Posterior vena cava (tissue), 2 donors: ENCODE measurements at regions of chr20 and their contacts with region 1.

Region 1: DNA sequence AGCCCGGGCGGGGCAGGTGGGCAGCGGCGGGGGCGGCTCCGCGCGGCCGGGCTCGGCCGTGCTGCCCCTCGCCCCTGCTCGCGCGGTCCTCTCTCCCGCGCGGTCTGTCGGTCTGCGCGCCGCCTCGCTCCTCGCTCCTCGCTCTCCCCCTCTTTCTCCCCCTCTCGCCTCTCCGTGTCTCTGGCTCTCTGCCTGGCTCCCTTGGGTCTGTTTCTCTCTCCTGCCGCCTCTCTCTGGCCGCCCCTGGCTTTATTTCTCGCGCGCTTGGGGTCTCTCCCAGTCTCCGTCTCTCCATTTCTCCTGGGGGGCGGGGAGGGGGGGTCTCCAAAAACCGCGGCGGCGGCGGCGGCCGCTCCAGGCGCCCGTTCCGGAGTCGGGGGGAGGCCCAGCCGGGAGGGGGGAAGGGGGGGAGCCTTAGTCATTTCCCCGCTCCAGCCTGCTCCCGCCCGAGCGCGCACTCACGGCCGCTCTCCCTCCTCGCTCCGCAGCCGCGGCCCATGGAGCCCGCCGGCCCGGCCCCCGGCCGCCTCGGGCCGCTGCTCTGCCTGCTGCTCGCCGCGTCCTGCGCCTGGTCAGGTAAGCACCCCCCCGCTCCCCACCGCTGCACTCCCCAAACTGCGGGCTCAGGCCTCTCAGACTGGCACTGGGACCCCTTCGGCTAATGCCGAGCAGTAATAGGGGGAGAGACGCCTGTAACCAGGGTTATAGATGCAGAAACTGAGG is at the start of gene SIRPA:
- DNase-seq: peak; percentile 91
- total RNA-seq, gene SIRPA: 39.7 to 42.1 TPM

Region 2: GRCh38 chr20:1802385-1803060 is 92.6 kb before region 1 on chr20:
- intact Hi-C with region 1: loop called in 1 of 2 experiments (anchors 10 kb)
- DNase-seq: peak; percentile 92

Region 3: DNA sequence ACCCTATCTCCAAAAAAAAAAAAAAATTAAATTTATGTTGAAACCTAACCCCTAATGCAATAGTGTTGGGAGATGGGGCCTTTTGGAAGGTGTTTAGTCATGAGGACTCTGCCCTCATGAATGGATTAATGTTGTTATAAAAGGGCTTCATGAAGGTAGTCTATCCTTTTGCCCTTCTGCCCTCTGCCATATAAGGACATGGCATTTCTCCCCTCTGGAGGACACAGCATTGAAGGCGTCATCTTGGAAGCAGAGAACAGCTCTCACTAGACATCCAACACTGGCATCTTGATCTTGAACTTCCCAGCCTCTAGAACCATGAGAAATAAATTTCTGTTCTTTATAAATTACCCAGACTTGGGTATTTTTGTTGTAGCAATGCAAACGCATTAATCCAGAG is 63.3 kb after region 1 on chr20:
- intact Hi-C with region 1: no loop called
- DNase-seq: no peak

Region 4: DNA sequence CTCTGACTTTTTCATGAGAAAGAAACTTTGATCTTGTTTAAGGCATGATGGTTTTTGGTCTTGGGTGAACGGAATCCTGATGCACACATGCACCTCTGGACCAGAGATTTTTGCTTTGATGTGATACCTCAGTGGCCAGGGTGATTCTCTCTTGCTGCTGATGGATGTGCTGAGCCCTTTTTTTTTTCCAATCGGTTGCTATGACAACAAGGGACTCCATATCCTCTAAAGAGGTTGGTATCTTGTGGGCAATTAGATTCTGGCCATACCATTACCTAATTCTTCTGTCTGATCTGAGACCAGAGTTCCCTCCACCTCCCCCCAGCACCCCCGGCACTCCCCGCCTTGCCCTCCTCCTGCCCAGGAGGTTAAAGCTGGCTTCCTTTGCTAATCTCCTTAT is 73.8 kb after region 1 on chr20:
- intact Hi-C with region 1: no loop called
- DNase-seq: no peak